Caco-2 (cell line): ENCODE measurements at regions of chr17 and their contacts with region 1.

Region 1: DNA sequence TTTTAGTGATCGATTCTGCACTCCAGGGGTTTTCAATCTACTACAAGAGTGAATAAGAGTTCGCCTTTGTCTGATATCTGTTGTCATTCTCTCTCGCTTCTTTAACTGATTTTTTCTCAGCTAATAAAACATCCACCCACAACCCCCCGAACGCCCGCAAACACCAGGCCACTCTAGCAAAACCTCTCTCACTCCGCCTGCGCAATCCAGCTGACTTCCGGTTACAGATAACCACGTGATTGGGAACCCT is 338 bp upstream of the RPL19 start:
- DNase-seq: peak; percentile 87 to 94
- H3K4me3 ChIP-seq: peak overlapping the region; percentile 87
- H3K4me3 Mint-ChIP-seq: peak overlapping the region; percentile 87
- H3K27ac Mint-ChIP-seq: peak overlapping the region; percentile 99
- H3K4me1 ChIP-seq: peaks cover 15% of the 10 kb centered on the region
- H3K4me1 Mint-ChIP-seq: peaks cover 6% of the 10 kb centered on the region
- H3K27me3 ChIP-seq: no peaks in the 10 kb centered on the region
- H3K27me3 Mint-ChIP-seq: no peaks in the 10 kb centered on the region
- CTCF ChIP-seq: no peak

Region 2: GRCh38 chr17:38729886-38730525 is 469.7 kb before region 1 on chr17 and contains the start of gene CISD3:
- CTCF ChIA-PET with region 1: no interaction called
- POLR2A ChIA-PET with region 1: no interaction called
- intact Hi-C with region 1: no loop called
- DNase-seq: peak; percentile 84 to 95
- H3K4me3 ChIP-seq: peak within 1 kb of the TSS; percentile 64
- H3K4me3 Mint-ChIP-seq: peak within 1 kb of the TSS; percentile 89
- H3K27ac Mint-ChIP-seq: peak within 1 kb of the TSS; percentile 85
- H3K4me1 ChIP-seq: peaks cover 20% of the 10 kb centered on the region
- H3K4me1 Mint-ChIP-seq: peaks cover 15% of the 10 kb centered on the region
- H3K27me3 ChIP-seq: no peaks in the 10 kb centered on the region
- H3K27me3 Mint-ChIP-seq: no peaks in the 10 kb centered on the region
- CTCF ChIP-seq: peak; percentile 32 to 74
- total RNA-seq, gene CISD3: 16.6 and 18.3 TPM in 2 replicates

Region 3: GRCh38 chr17:38967290-38967738 is 232.4 kb before region 1 on chr17 and contains the start of gene FBXO47:
- CTCF ChIA-PET with region 1: no interaction called
- POLR2A ChIA-PET with region 1: interaction called, 23 read pairs
- intact Hi-C with region 1: no loop called
- DNase-seq: peak; percentile 95 to 98
- H3K4me3 ChIP-seq: peak within 1 kb of the TSS; percentile 46
- H3K4me3 Mint-ChIP-seq: peak within 1 kb of the TSS; percentile 80
- H3K27ac Mint-ChIP-seq: peak within 1 kb of the TSS; percentile 84
- H3K4me1 ChIP-seq: no peaks in the 10 kb centered on the region
- H3K4me1 Mint-ChIP-seq: peaks cover 5% of the 10 kb centered on the region
- H3K27me3 ChIP-seq: no peaks in the 10 kb centered on the region
- H3K27me3 Mint-ChIP-seq: no peaks in the 10 kb centered on the region
- CTCF ChIP-seq: peak in 1 of 2 experiments; percentile 53
- total RNA-seq, gene FBXO47: not detected in 2 replicates

Region 4: DNA sequence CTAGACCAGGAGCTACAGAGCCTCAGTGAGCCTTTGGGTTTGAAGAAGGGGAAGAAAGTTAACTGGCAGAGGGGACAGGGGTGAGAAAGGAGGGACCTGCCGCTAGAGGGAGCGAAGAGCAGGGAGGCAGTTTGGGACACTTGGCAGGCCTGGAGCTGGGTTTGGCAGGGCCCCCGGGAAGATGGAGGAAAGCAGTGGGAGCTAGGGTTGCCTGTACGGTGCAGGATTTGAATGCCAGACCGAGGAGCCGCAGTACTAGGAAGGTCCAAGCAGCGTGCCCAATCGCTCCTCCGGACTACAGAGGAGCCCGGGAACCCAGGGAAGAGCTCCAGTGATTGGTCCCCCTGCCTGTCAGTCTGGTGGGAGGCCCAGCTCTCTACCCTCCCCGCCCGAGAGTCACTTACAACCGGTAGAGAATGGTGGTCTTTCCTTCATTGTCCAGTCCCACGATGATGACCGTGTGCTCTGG is 35.0 kb before region 1 on chr17:
- CTCF ChIA-PET with region 1: interaction called, 15 read pairs
- POLR2A ChIA-PET with region 1: interaction called, 12 read pairs
- intact Hi-C with region 1: no loop called
- DNase-seq: peak; percentile 79 to 80
- H3K4me3 ChIP-seq: no peak overlapping the region
- H3K4me3 Mint-ChIP-seq: no peak overlapping the region
- H3K27ac Mint-ChIP-seq: no peak overlapping the region
- H3K4me1 ChIP-seq: peaks cover 21% of the 10 kb centered on the region
- H3K4me1 Mint-ChIP-seq: peaks cover 23% of the 10 kb centered on the region
- H3K27me3 ChIP-seq: no peaks in the 10 kb centered on the region
- H3K27me3 Mint-ChIP-seq: no peaks in the 10 kb centered on the region
- CTCF ChIP-seq: peak; percentile 76 to 86

Region 5: GRCh38 chr17:39244600-39245570 is 45.1 kb after region 1 on chr17:
- CTCF ChIA-PET with region 1: interaction called, 123 read pairs
- POLR2A ChIA-PET with region 1: interaction called, 4 read pairs
- intact Hi-C with region 1: no loop called
- DNase-seq: peak; percentile 86 to 92
- H3K4me3 ChIP-seq: no peak overlapping the region
- H3K4me3 Mint-ChIP-seq: no peak overlapping the region
- H3K27ac Mint-ChIP-seq: no peak overlapping the region
- H3K4me1 ChIP-seq: no peaks in the 10 kb centered on the region
- H3K4me1 Mint-ChIP-seq: no peaks in the 10 kb centered on the region
- H3K27me3 ChIP-seq: no peaks in the 10 kb centered on the region
- H3K27me3 Mint-ChIP-seq: no peaks in the 10 kb centered on the region
- CTCF ChIP-seq: peak; percentile 94 to 96

Region 6: DNA sequence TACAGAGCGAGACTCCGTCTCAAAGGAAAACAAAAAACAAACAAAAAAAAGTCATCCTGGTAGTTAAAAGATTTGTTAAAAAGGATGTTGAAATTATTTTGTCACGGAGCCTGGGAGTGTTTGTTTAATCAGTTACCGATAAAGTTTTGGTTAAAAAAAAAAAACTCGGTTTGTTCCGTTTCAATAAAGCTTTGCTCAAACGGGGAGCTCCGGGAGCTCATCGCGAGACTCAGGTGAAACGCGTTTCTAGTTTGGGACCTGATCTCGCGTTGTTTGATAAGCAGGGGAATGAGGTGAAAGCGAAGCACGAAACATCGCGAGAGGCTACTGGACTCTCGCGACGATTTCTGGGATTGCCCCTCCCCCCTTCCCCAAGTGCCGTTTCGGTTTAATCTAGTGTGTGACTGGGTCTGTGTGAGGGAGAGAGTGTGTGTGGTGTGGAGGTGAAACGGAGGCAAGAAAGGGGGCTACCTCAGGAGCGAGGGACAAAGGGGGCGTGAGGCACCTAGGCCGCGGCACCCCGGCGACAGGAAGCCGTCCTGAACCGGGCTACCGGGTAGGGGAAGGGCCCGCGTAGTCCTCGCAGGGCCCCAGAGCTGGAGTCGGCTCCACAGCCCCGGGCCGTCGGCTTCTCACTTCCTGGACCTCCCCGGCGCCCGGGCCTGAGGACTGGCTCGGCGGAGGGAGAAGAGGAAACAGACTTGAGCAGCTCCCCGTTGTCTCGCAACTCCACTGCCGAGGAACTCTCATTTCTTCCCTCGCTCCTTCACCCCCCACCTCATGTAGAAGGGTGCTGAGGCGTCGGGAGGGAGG is 261.6 kb after region 1 on chr17 and contains the start of gene CDK12:
- CTCF ChIA-PET with region 1: no interaction called
- POLR2A ChIA-PET with region 1: interaction called, 11 read pairs
- intact Hi-C with region 1: no loop called
- DNase-seq: peak; percentile 97 to 99
- H3K4me3 ChIP-seq: peak within 1 kb of the TSS; percentile 83
- H3K4me3 Mint-ChIP-seq: peak within 1 kb of the TSS; percentile 84
- H3K27ac Mint-ChIP-seq: peak within 1 kb of the TSS; percentile 95
- H3K4me1 ChIP-seq: no peaks in the 10 kb centered on the region
- H3K4me1 Mint-ChIP-seq: peaks cover 7% of the 10 kb centered on the region
- H3K27me3 ChIP-seq: no peaks in the 10 kb centered on the region
- H3K27me3 Mint-ChIP-seq: no peaks in the 10 kb centered on the region
- CTCF ChIP-seq: no peak
- total RNA-seq, gene CDK12: 85.5 and 86.6 TPM in 2 replicates